WTC11 (cell line): ENCODE measurements at regions of chr10 and their contacts with region 1.

Region 1: GRCh38 chr10:11225935-11226334 is 208.3 kb downstream of the CELF2 start:
- DNase-seq: no peak
- ATAC-seq: no peak
- H3K4me3 Mint-ChIP-seq: no peak overlapping the region
- H3K27ac Mint-ChIP-seq: no peak overlapping the region
- H3K4me1 Mint-ChIP-seq: peaks cover 33% of the 10 kb centered on the region
- H3K27me3 Mint-ChIP-seq: no peaks in the 10 kb centered on the region
- CTCF ChIP-seq: no peak

Region 2: DNA sequence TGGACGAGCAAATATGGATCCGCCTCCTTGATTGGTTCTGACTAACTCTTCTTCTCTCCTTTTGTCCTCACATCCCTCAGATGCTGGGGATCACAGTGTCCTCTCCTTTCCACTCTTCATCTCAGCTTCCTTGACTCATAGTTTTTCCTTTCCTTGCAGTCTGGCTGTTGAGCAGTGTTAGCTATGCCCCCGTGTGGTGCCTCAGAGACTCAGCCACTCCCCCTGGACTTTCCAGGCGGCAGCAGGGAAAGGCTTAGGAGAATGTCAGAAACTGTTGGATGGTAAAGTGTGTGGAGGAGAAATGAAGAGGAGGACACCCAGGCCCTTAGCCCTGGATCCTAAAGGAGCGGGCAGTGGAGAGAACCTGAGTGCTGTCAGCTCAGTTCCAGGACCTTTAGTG is 59.2 kb after region 1 on chr10:
- CTCF ChIA-PET with region 1: no interaction called
- POLR2A ChIA-PET with region 1: no interaction called
- DNase-seq: no peak
- ATAC-seq: no peak
- H3K4me3 Mint-ChIP-seq: no peak overlapping the region
- H3K27ac Mint-ChIP-seq: no peak overlapping the region
- H3K4me1 Mint-ChIP-seq: no peaks in the 10 kb centered on the region
- H3K27me3 Mint-ChIP-seq: no peaks in the 10 kb centered on the region
- CTCF ChIP-seq: no peak

Region 3: DNA sequence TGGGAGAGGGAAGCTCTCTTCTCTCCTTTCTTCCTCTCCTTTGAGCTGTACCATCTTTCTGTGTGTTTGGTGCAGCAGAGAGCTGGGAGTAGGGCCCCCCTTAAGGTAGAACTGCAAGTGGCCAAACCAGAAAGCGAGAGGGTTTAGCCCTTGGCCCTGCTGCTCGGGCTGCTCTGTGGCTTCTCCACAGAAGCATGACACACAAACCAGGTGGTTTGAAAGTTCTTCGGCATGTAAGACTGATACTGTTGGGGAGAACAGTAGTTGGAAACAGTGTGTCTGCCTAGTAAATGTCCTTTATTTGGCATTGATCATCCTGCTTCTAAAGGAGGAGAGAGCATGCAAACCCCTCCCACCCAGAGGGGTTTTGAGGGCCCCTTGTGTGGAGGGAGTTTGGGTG is 69.6 kb after region 1 on chr10:
- CTCF ChIA-PET with region 1: no interaction called
- POLR2A ChIA-PET with region 1: interaction called, 10 read pairs
- DNase-seq: no peak
- ATAC-seq: no peak
- H3K4me3 Mint-ChIP-seq: no peak overlapping the region
- H3K27ac Mint-ChIP-seq: no peak overlapping the region
- H3K4me1 Mint-ChIP-seq: peaks cover 8% of the 10 kb centered on the region
- H3K27me3 Mint-ChIP-seq: no peaks in the 10 kb centered on the region
- CTCF ChIP-seq: no peak